Heart right ventricle (tissue), 16 donors: ENCODE measurements at regions of chr14 and their contacts with region 1.

Region 1: GRCh38 chr14:73458151-73458976 is at the start of gene NUMB:
- DNase-seq: peak; percentile 93 to 99
- ATAC-seq: peak; percentile 97 to 98 (median 98)
- H3K4me3 ChIP-seq: peak within 1 kb of the TSS; percentile 69 to 98 (median 90)
- H3K27ac ChIP-seq: peak within 1 kb of the TSS; percentile 42 to 96 (median 93)
- H3K4me1 ChIP-seq: peaks cover 5 to 87% (median 71%) of the 10 kb centered on the region in 9 donors
- H3K27me3 ChIP-seq: no peaks in the 10 kb centered on the region
- CTCF ChIP-seq: no peak
- total RNA-seq, gene NUMB: 27.0 to 42.6 (median 33.3) TPM

Region 2: DNA sequence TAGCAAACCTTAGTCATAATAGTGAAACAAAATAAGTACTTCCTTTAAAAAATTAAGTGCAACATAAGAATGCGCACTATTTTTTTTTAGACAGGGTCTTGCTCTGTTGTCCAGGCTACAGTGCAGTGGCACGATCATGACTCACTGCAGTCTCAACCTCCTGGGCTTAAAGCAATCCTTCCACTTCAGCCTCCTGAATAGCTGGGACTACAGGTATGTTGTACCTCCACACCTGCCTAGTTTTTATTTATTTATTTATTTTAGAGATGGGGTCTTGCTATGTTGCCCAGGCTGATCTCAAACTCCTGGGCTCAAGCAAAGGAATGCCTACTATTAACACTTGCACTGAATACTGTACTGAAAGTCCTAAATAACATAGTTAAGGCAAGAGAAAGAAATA is 93.8 kb before region 1 on chr14:
- intact Hi-C with region 1: loop called in 1 of 10 experiments (anchors 5 kb)
- DNase-seq: no peak
- ATAC-seq: no peak
- H3K4me3 ChIP-seq: no peak overlapping the region
- H3K27ac ChIP-seq: no peak overlapping the region
- H3K4me1 ChIP-seq: peaks cover 0 to 13% (median 7%) of the 10 kb centered on the region in 9 donors
- H3K27me3 ChIP-seq: no peaks in the 10 kb centered on the region
- CTCF ChIP-seq: no peak

Region 3: DNA sequence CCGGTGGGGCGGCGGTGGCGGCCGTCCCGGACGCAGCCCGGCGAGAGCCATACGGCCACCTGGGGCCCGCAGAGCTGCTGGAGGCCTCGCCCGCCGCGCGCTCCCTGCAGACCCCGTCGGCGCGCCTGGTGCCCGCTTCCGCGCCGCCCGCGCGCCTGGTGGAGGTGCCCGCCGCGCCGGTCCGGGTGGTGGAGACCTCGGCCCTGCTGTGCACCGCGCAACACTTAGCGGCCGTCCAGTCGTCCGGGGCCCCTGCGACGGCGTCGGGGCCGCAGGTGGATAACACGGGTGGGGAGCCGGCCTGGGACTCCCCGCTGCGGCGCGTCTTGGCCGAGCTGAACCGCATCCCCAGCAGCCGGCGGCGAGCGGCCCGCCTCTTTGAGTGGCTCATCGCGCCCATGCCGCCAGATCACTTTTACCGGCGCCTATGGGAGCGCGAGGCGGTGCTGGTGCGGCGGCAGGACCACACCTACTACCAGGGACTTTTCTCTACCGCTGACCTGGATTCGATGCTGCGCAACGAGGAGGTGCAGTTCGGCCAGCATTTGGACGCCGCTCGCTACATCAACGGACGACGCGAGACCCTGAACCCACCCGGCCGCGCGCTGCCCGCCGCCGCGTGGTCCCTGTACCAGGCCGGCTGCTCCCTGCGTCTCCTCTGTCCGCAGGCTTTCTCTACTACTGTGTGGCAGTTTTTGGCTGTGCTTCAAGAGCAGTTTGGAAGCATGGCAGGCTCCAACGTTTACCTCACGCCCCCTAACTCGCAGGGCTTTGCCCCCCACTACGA is 33.1 kb after region 1 on chr14:
- intact Hi-C with region 1: loop called in 1 of 10 experiments (anchors 2 kb)
- DNase-seq: peak; percentile 23 to 59
- ATAC-seq: peak; percentile 39 to 79 (median 51)
- H3K4me3 ChIP-seq: peak overlapping the region; percentile 59 to 84 (median 76)
- H3K27ac ChIP-seq: peak overlapping the region; percentile 4 to 92 (median 87)
- H3K4me1 ChIP-seq: peaks cover 9 to 44% (median 26%) of the 10 kb centered on the region in 9 donors
- H3K27me3 ChIP-seq: no peaks in the 10 kb centered on the region
- CTCF ChIP-seq: no peak